B cell (primary cell): ENCODE measurements at regions of chrX and their contacts with region 1.

Region 1: GRCh38 chrX:109485470-109486340 is 3.8 kb upstream of the GUCY2F start:
- DNase-seq: peak; percentile 82
- ATAC-seq: peak; percentile 76
- H3K4me3 ChIP-seq: no peak overlapping the region
- H3K4me3 Mint-ChIP-seq: no peak overlapping the region
- H3K27ac ChIP-seq: no peak overlapping the region
- H3K27ac Mint-ChIP-seq: no peak overlapping the region
- H3K4me1 ChIP-seq: peaks cover 10 to 11% of the 10 kb centered on the region in 2 donors
- H3K4me1 Mint-ChIP-seq: peaks cover 10% of the 10 kb centered on the region
- H3K27me3 ChIP-seq: no peaks in the 10 kb centered on the region
- H3K27me3 Mint-ChIP-seq: peaks cover 8% of the 10 kb centered on the region
- CTCF ChIP-seq: peak; percentile 94

Region 2: DNA sequence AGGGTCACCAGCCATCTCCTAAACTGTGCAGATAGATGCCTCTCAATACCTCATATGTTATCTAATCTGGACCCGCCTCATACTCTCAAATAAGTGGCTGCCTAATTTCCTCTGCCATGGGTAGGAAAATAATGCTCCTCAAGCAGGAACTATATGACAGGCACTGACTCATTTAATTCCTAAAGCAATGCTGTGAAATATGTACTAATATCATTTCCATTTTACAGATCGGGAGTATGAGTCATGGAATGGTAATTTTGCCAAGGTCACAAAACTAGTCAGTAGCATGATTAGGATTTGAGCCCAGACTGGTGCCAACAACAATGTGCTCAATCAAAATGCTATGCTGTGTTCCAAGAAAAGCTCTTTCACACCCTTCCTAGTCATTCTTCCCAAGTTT is 47.9 kb after region 1 on chrX:
- CTCF ChIA-PET with region 1: interaction called, 5 read pairs
- POLR2A ChIA-PET with region 1: no interaction called
- intact Hi-C with region 1: loop called (anchors 5 kb)
- DNase-seq: no peak
- ATAC-seq: no peak
- H3K4me3 ChIP-seq: no peak overlapping the region
- H3K4me3 Mint-ChIP-seq: peak overlapping the region; percentile 23
- H3K27ac ChIP-seq: no peak overlapping the region
- H3K27ac Mint-ChIP-seq: no peak overlapping the region
- H3K4me1 ChIP-seq: peaks cover 18 to 20% of the 10 kb centered on the region in 2 donors
- H3K4me1 Mint-ChIP-seq: peaks cover 35% of the 10 kb centered on the region
- H3K27me3 ChIP-seq: no peaks in the 10 kb centered on the region
- H3K27me3 Mint-ChIP-seq: no peaks in the 10 kb centered on the region
- CTCF ChIP-seq: no peak

Region 3: DNA sequence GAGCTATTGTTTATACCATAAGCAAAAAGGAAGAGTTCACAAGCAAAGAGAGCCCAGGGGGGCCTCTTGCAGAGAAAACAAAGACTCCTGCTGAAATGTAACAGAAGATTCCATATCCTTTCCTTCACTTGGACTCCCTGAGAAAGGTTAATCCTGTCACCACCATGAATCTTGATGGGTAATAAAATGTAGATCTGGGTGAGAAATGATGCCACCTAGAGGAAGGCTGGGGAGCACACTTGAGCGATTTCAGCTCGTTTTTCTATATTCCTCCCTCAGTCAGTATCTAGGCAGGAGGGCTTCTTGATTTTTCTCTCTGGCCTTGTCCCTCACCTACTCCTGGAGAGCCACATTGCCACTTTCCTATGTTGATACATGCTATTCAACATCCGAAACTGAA is 149.5 kb after region 1 on chrX:
- CTCF ChIA-PET with region 1: interaction called, 100 read pairs
- POLR2A ChIA-PET with region 1: no interaction called
- intact Hi-C with region 1: loop called (anchors 1 kb)
- DNase-seq: peak; percentile 25
- ATAC-seq: no peak
- H3K4me3 ChIP-seq: no peak overlapping the region
- H3K4me3 Mint-ChIP-seq: no peak overlapping the region
- H3K27ac ChIP-seq: no peak overlapping the region
- H3K27ac Mint-ChIP-seq: no peak overlapping the region
- H3K4me1 ChIP-seq: no peaks in the 10 kb centered on the region
- H3K4me1 Mint-ChIP-seq: no peaks in the 10 kb centered on the region
- H3K27me3 ChIP-seq: no peaks in the 10 kb centered on the region
- H3K27me3 Mint-ChIP-seq: no peaks in the 10 kb centered on the region
- CTCF ChIP-seq: peak; percentile 47